ENCODE measurements at regions of chr11 and their contacts with region 1.

Region 1: GRCh38 chr11:111694851-111695250 is 71.3 kb downstream of the PPP2R1B start:
- DNase-seq: peak; percentile 99
- ATAC-seq: peak; percentile 78
- H3K4me3 ChIP-seq: no peak overlapping the region
- H3K27ac ChIP-seq: no peak overlapping the region
- H3K4me1 ChIP-seq: peaks cover 17% of the 10 kb centered on the region
- H3K27me3 ChIP-seq: no peaks in the 10 kb centered on the region
- CTCF ChIP-seq: no peak
- POLR2A ChIP-seq: no peak
- RAD21 ChIP-seq: no peak

Region 2: GRCh38 chr11:111399187-111400031 is 295.4 kb before region 1 on chr11:
- CTCF ChIA-PET with region 1: no interaction called
- POLR2A ChIA-PET with region 1: no interaction called
- dilution Hi-C with region 1: no loop called
- in situ Hi-C with region 1: no loop called
- intact Hi-C with region 1: no loop called
- DNase-seq: no peak
- ATAC-seq: no peak
- H3K4me3 ChIP-seq: no peak overlapping the region
- H3K27ac ChIP-seq: no peak overlapping the region
- H3K4me1 ChIP-seq: no peaks in the 10 kb centered on the region
- H3K27me3 ChIP-seq: peaks cover 32% of the 10 kb centered on the region
- CTCF ChIP-seq: no peak
- POLR2A ChIP-seq: no peak
- RAD21 ChIP-seq: no peak

Region 3: DNA sequence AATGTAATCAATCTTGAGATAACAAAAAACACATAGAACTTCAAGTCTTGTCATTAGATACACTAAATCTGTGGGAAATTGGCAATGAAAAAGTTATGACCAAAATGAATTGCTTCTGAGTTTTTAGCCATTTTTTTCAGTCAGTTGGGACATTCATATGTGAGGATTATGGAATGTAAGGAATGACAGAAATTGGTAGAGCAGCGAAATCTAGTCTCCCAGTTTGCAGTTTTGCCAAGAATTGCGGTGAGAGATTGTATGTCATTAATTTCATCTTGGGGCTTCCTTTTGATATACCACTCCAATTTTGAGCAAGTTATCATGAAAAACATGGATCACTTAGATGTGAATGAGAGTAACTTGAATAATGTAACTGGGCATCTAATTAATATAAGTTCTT is 42.7 kb before region 1 on chr11:
- CTCF ChIA-PET with region 1: interaction called, 4 read pairs
- POLR2A ChIA-PET with region 1: no interaction called
- dilution Hi-C with region 1: no loop called
- in situ Hi-C with region 1: no loop called
- intact Hi-C with region 1: loop called (anchors 5 kb)
- DNase-seq: no peak
- ATAC-seq: no peak
- H3K4me3 ChIP-seq: no peak overlapping the region
- H3K27ac ChIP-seq: no peak overlapping the region
- H3K4me1 ChIP-seq: peaks cover 3% of the 10 kb centered on the region; the same call in 1 of the 2 replicates
- H3K27me3 ChIP-seq: no peaks in the 10 kb centered on the region
- CTCF ChIP-seq: no peak
- POLR2A ChIP-seq: no peak
- RAD21 ChIP-seq: no peak

Region 4: GRCh38 chr11:112004389-112004788 is 309.5 kb after region 1 on chr11:
- CTCF ChIA-PET with region 1: no interaction called
- POLR2A ChIA-PET with region 1: no interaction called
- dilution Hi-C with region 1: no loop called
- in situ Hi-C with region 1: no loop called
- intact Hi-C with region 1: no loop called
- DNase-seq: no peak
- ATAC-seq: no peak
- H3K4me3 ChIP-seq: no peak overlapping the region
- H3K27ac ChIP-seq: no peak overlapping the region
- H3K4me1 ChIP-seq: no peaks in the 10 kb centered on the region
- H3K27me3 ChIP-seq: no peaks in the 10 kb centered on the region
- CTCF ChIP-seq: peak; percentile 26; the same call in 1 of the 2 replicates
- POLR2A ChIP-seq: no peak
- RAD21 ChIP-seq: 0 out of 2 replicates have a peak, but pooled peaks have one; percentile 16